ENCODE measurements at regions of chr1 and their contacts with region 1.

Region 1: DNA sequence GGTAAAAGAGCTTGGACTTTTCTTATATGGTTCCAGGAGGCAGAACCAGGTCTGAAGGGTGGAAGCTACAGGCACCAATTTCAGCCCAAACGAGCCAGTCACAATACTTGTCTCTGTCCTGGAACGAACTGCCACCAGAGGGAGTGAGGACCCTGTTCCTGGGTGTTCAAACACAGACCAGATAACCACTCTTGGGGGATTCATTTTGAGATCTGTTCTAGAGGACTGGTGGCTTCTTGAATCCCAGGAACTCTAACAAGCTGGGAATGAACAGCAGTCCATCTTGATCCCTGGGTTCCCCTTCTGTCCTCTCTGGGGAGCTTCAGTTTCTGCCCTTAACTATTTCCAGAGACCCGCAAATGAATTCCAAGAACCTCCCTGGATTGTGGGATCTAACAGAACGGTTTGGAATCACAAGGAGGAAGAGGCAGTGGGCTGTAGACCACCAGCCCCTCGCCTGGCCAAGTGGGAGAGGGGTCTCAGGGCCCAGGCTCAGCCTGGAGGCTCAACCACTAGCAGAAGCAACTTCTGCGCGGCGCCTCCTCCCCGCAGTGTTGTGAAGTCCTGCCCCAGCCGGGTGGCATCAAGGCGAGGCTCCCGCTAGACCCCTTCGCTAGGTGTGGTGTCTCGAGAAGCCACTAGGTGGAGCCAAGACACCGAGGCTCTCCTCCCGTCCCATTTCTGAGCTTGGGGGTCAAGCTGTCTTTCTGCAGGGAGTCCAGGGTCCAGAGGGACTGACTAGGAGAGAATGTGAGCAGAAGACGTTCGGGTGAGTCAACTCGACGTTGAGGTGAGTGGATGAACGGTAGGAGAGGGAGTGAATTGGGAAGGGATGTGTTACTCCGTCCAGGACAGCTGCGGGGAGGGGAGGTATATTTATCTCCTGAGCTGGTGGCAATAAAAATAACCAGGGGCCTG is 12.1 kb upstream of the NES start:
- DNase-seq: peak; percentile 72 to 84
- H3K4me3 ChIP-seq: peak overlapping the region; percentile 48; the same call in 1 of the 2 replicates
- H3K27ac ChIP-seq: no peak overlapping the region
- H3K4me1 ChIP-seq: peaks cover 82% of the 10 kb centered on the region
- H3K27me3 ChIP-seq: no peaks in the 10 kb centered on the region
- CTCF ChIP-seq: peak; percentile 95

Region 2: DNA sequence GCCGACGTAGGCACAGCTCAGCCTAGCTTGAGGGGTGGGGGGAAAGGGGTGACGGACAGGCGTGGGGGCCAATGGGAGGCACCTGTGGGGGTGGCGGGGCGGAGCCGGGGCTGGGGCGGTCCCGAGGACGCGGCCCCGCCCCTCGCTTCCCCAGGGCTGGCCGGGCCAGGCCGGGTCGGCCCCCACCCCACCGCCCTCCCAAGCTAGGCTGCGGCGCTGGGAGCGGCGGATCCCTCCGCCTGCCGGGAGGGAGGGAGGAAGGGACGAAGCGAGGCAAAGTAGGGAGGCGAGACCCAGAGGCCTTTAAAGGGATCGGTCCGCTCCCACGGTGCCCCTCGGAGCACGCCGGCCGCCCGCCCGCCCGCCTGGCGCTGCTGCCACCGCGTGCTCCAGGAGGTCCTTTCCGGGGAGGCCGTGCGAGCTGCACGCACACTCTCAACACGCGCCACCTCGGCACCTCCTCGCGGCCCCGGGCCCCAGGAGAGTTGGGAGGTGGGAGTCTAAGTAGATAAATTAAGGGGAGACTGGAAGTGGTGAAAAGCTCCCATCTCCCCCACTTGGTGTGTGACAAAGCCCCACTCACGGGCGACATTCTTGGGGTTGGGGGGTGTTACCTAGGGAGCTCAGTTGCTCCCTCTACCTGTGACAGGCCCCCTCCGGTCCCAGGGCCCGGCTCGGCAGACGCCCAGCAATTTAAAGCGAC is 188.3 kb before region 1 on chr1:
- CTCF ChIA-PET with region 1: no interaction called
- POLR2A ChIA-PET with region 1: interaction called, 7 read pairs
- intact Hi-C with region 1: loop called (anchors 5 kb)
- DNase-seq: peak; percentile 87 to 93
- H3K4me3 ChIP-seq: peak overlapping the region; percentile 100
- H3K27ac ChIP-seq: peak overlapping the region; percentile 97
- H3K4me1 ChIP-seq: peaks cover 55% of the 10 kb centered on the region
- H3K27me3 ChIP-seq: no peaks in the 10 kb centered on the region
- CTCF ChIP-seq: peak; percentile 74

Region 3: DNA sequence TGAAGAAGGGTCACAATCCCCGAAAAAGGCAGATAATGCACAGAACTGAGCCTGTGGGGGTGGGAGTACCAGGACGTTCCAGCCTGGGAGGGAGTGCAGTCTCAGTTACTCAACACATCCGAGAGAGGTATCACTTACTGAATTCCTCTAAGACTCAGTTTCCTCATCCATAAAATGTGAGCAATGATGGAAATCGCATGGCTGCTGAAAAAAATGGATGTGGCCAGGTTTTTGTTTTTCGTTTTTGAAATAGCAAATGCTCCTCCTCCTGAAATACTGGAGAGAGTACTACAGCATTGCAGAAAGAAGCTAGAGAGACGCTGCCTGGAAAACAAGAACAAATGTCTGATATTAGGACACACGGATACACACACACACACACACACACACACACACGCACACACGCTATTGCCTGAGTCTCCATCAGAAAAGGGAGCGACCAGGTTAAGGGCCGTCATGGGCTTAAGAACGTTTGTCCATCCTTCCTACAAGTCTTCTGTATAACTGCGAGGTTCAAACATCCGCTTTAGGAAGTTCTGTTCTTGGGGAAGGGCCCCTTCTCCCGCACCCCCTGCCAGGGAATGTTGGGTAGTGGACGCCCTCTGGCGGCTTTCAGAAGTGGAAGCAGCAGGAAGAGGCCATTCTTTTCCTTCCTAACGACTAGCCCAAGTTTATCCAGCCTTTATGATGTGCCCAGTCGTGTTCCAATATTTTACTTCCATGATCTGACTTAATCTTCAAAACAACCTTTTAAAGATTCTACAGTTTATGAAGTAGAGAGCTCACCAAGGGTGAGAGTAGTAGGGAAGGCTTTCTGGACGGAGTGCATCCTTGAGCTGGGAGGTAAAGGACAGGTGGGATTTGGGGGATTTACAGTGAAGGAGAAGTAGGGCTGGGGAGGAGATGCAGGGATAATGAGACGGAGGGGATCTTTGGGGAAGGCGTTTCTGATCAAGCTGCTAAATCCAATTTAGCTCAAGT is 11.4 kb before region 1 on chr1:
- CTCF ChIA-PET with region 1: interaction called, 3 read pairs
- POLR2A ChIA-PET with region 1: interaction called, 12 read pairs
- intact Hi-C with region 1: no loop called
- DNase-seq: peak in 1 of 2 experiments; percentile 56
- H3K4me3 ChIP-seq: peak overlapping the region; percentile 39; the same call in 1 of the 2 replicates
- H3K27ac ChIP-seq: no peak overlapping the region
- H3K4me1 ChIP-seq: peaks cover 9% of the 10 kb centered on the region
- H3K27me3 ChIP-seq: peaks cover 24% of the 10 kb centered on the region
- CTCF ChIP-seq: peak; percentile 91

Region 4: DNA sequence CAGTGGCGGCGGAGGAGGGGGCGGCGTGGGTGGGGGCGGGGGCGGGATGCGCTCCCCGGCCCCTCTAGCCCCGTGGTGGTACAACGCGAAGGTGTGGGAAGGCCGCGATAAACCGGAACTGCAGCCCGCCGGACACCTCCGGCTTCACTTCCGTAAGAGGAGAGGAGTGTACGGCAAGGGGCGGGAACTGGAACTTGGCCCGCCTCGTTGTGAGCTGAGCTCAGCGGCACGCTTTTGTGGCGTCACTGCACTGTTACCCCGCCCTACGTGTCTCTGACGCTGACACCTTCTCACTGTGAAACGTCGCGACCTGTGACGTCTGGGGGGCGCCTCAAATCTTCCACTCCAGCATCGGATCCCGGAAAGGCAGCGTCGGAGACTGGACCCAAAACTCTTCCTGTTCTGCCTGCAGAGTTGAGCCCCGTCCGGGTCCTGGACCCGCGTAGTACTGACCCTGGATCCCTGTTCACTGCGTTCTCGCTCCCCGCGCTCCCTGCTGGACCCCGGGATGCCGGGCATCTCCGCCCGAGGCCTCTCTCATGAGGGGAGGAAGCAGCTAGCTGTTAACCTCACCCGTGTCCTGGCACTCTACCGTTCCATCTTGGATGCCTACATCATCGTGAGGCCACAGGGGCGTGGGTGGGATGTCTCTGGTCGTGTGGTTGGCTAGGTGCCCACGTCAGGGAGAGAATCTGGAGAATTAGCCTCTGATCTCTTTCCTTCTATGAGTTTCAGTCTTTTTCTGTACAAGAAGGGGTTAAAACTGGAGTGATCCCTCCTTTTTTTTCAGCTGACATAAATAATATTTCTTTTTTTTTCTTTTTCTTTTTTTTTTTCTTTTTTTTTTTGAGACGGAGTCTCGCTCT is 39.5 kb after region 1 on chr1 and contains the start of gene ISG20L2:
- CTCF ChIA-PET with region 1: interaction called, 63 read pairs
- POLR2A ChIA-PET with region 1: interaction called, 5 read pairs
- intact Hi-C with region 1: loop called (anchors 1 kb)
- DNase-seq: peak; percentile 93 to 94
- H3K4me3 ChIP-seq: peak within 1 kb of the TSS; percentile 90
- H3K27ac ChIP-seq: peak within 1 kb of the TSS; percentile 46
- H3K4me1 ChIP-seq: peaks cover 30% of the 10 kb centered on the region
- H3K27me3 ChIP-seq: no peaks in the 10 kb centered on the region
- CTCF ChIP-seq: no peak
- total RNA-seq, gene ISG20L2: 25.4 and 33.2 TPM in 2 replicates

Region 5: GRCh38 chr1:156860113-156860627 is 170.9 kb after region 1 on chr1:
- CTCF ChIA-PET with region 1: interaction called, 15 read pairs
- POLR2A ChIA-PET with region 1: no interaction called
- intact Hi-C with region 1: loop called (anchors 2 kb)
- DNase-seq: peak in 1 of 2 experiments; percentile 49
- H3K4me3 ChIP-seq: peak overlapping the region; percentile 40; the same call in 1 of the 2 replicates
- H3K27ac ChIP-seq: no peak overlapping the region
- H3K4me1 ChIP-seq: peaks cover 12% of the 10 kb centered on the region
- H3K27me3 ChIP-seq: peaks cover 58% of the 10 kb centered on the region
- CTCF ChIP-seq: peak; percentile 80

Region 6: GRCh38 chr1:156927215-156928042 is 238.1 kb after region 1 on chr1:
- CTCF ChIA-PET with region 1: interaction called, 10 read pairs
- POLR2A ChIA-PET with region 1: no interaction called
- intact Hi-C with region 1: loop called (anchors 1 kb)
- DNase-seq: peak; percentile 68 to 79
- H3K4me3 ChIP-seq: peak overlapping the region; percentile 64
- H3K27ac ChIP-seq: no peak overlapping the region
- H3K4me1 ChIP-seq: peaks cover 30% of the 10 kb centered on the region
- H3K27me3 ChIP-seq: no peaks in the 10 kb centered on the region
- CTCF ChIP-seq: peak; percentile 77

Measured in PC-9 (cell line).